ENCODE measurements at regions of chr1 and their contacts with region 1.

Region 1: DNA sequence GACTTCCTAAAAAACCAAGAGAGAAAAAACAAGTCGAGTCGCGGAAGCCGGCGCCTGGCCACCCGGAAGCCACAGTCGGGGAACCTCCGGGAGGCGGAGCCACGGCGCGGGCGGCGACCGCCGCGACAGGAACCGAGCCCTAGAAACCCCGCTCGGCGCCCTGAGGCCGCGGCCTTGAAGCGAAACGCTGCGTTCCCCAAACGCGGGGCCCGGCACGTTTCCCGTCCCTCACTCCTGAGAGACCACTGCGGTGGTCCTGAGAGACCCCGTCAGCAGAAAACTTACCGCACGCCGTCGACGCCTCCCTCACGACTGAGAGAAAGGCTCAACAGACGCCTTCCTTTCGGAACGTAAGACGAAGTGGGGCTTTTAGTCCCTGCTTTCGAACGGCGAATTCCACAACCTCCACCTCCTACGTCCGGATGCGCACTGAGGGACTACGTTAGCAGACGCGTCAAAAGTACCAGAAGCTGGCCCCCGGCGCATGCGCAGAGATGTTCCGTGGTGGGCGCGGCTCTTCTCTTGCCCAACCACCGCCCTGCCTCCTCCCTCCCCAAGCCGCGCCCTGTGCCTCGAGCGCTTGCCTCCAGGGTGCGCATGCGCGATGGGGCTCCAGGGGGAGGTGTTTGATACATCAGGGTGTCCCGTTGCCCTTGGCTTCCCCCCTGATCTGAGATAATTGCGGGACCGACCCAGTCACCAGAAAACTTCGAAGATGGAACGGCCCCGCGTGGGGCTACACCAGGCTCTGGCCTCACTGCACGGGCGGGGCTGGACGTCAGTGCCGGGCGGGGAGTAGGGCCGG is at the start of gene RSRP1:
- DNase-seq: peak; percentile 98
- H3K4me3 ChIP-seq: peak within 1 kb of the TSS; percentile 57 to 99 (median 85)
- H3K4me3 Mint-ChIP-seq: peak within 1 kb of the TSS; percentile 96 to 98
- H3K27ac ChIP-seq: peak within 1 kb of the TSS; percentile 98
- H3K27ac Mint-ChIP-seq: peak within 1 kb of the TSS; percentile 98 to 100 (median 99)
- H3K4me1 ChIP-seq: peaks cover 28 to 46% of the 10 kb centered on the region in 2 donors
- H3K4me1 Mint-ChIP-seq: peaks cover 36% of the 10 kb centered on the region
- H3K27me3 ChIP-seq: no peaks in the 10 kb centered on the region
- H3K27me3 Mint-ChIP-seq: peaks cover 0 to 5% (median 0%) of the 10 kb centered on the region in 3 donors
- CTCF ChIP-seq: no peak
- polyA plus RNA-seq, gene RSRP1: 23.6 to 272 (median 30.2) TPM

Region 2: GRCh38 chr1:25182629-25183028 is 64.6 kb before region 1 on chr1:
- intact Hi-C with region 1: no loop called
- DNase-seq: no peak
- H3K4me3 ChIP-seq: no peak overlapping the region
- H3K4me3 Mint-ChIP-seq: no peak overlapping the region
- H3K27ac ChIP-seq: no peak overlapping the region
- H3K27ac Mint-ChIP-seq: no peak overlapping the region
- H3K4me1 ChIP-seq: no peaks in the 10 kb centered on the region
- H3K4me1 Mint-ChIP-seq: peaks cover 1% of the 10 kb centered on the region
- H3K27me3 ChIP-seq: no peaks in the 10 kb centered on the region
- H3K27me3 Mint-ChIP-seq: peaks cover 3 to 10% (median 6%) of the 10 kb centered on the region in 3 donors
- CTCF ChIP-seq: no peak

Region 3: DNA sequence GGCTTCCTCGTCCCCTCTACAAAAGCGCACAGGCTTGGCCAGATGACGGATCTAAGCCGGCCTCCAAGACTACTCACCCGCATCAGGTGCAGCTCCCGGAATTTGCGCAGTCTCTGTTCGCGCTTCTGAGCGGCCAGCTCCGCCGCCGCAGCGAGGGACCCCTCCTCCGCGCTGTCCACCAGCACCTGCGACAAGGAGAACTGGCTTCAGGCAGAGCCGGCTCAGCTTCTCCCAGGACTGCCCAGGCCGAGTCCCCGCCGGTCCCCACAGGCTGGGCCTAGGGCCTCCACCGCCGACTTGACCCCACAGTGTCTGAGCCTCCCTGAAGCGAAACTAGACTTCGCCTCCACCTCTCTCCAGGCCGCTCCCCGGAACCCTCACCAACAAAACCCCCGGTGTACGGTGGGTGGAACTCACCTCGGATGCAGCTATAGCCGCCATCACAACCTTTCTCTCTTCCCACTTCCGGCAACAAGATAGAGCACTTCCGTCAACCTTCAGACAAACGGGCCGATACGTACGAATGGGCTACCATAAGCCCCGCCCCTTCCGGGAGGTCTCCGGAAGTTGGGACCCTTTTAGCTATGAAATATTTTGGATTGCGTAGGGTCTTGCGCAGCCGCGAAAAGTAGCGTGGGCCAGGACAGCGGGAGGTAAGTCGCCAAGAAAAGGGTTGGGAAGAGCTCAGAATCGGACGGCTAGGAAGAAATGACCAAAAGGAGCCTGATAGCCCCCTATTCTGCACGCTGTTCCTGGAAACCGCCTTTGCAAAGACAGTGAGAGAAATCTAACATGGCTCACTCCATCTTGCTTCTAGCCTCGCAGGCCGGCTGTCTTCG is 15.0 kb before region 1 on chr1 and contains the start of gene SYF2:
- intact Hi-C with region 1: no loop called
- DNase-seq: peak; percentile 79 to 91 (median 90)
- H3K4me3 ChIP-seq: peak within 1 kb of the TSS; percentile 72 to 88 (median 86)
- H3K4me3 Mint-ChIP-seq: no peak within 1 kb of the TSS
- H3K27ac ChIP-seq: peak within 1 kb of the TSS; percentile 95 to 96
- H3K27ac Mint-ChIP-seq: no peak within 1 kb of the TSS
- H3K4me1 ChIP-seq: peaks cover 13 to 30% of the 10 kb centered on the region in 2 donors
- H3K4me1 Mint-ChIP-seq: peaks cover 14% of the 10 kb centered on the region
- H3K27me3 ChIP-seq: no peaks in the 10 kb centered on the region
- H3K27me3 Mint-ChIP-seq: no peaks in the 10 kb centered on the region
- CTCF ChIP-seq: no peak
- polyA plus RNA-seq, gene SYF2: 32.0 to 52.9 (median 45.1) TPM

Region 4: DNA sequence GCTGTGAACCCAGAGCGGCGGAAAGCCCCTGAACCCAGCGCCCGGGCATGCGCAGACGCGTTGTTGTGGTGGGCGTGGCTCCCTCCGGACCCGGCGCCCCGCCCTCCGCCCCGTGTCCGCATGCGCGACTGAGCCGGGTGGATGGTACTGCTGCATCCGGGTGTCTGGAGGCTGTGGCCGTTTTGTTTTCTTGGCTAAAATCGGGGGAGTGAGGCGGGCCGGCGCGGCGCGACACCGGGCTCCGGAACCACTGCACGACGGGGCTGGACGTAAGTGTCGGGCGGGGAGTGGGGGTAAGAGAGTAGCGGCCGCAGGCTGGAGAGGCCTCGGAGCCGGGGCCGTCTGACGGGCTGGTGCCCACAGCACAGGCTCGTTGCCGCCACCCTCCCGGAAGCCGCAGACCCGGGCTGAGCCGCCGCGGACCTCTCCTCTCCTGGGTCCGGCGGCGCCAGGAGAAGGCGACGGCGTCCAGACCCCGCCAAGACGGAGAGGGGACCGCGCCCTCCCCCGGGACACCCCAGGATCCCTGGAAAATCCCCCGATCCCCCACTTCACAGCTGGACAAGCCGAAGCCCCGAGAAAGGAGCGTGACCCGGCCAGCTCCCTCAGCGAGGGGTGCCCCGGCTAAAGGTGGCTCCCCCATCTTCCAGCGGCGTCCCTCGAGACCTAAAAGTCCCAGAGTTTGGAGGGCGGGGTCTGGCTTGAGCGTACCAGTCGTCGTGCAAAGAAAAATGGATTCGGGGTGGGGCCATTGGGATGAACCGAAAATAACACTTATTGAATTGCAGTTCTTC is 91.2 kb after region 1 on chr1 and contains the start of gene TMEM50A:
- intact Hi-C with region 1: loop called in 1 of 2 experiments (anchors 5 kb)
- DNase-seq: peak; percentile 74 to 85 (median 84)
- H3K4me3 ChIP-seq: peak within 1 kb of the TSS; percentile 97 to 98 (median 98)
- H3K4me3 Mint-ChIP-seq: peak within 1 kb of the TSS; percentile 95 to 99
- H3K27ac ChIP-seq: peak within 1 kb of the TSS; percentile 97 to 99
- H3K27ac Mint-ChIP-seq: peak within 1 kb of the TSS; percentile 91 to 98 (median 95)
- H3K4me1 ChIP-seq: peaks cover 12 to 21% of the 10 kb centered on the region in 2 donors
- H3K4me1 Mint-ChIP-seq: peaks cover 24% of the 10 kb centered on the region
- H3K27me3 ChIP-seq: no peaks in the 10 kb centered on the region
- H3K27me3 Mint-ChIP-seq: no peaks in the 10 kb centered on the region
- CTCF ChIP-seq: no peak
- polyA plus RNA-seq, gene TMEM50A: 61.1 to 305 (median 277) TPM